Activated naive CD8-positive, alpha-beta T cell treated with anti-CD3 and anti-CD28 coated beads, Interleukin-2, amount 10 ng/mL, durations not matched to agents 7 days and 5 days (primary cell): ENCODE measurements at regions of chr12 and their contacts with region 1.

Region 1: DNA sequence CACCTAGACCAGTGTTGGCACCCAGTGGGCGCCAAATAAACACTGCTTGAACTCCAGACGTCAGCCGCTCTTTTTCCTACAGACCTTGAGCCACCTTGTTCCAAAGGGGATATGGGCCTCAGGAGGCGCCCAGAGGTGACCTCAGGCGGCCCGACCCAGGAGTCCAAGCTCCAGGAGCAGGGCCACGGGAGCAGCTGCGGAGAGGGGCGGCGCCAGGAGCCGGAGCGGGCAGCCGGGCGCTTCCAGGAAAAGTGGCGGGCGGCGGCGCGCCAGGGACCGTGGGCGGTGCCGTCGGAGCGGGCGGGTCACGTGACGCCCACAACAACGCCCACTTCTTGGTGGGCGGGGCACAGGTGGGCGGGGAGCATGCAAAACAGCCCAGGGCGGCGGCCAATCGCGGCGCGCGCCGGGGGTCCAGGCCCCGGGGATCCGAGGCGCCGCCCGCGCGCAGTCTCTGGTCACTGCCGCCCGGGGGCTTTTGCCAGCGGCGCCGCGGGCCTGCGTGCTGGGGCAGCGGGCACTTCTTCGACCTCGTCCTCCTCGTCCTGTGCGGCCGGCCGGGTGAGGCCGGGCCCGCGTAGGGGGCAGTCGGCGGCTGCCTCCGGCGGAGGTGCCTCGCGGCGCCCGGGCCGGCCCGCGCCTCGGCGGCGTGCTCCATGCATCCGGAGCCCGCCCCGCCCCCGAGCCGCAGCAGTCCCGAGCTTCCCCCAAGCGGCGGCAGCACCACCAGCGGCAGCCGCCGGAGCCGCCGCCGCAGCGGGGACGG is at the start of gene ORAI1:
- DNase-seq: peak; percentile 99
- ATAC-seq: peak; percentile 72
- H3K4me3 Mint-ChIP-seq: peak within 1 kb of the TSS; percentile 96
- H3K27ac Mint-ChIP-seq: peak within 1 kb of the TSS; percentile 96
- H3K4me1 Mint-ChIP-seq: peaks cover 42% of the 10 kb centered on the region
- H3K27me3 Mint-ChIP-seq: no peaks in the 10 kb centered on the region
- total RNA-seq, gene ORAI1: 54.2 to 60.1 TPM

Region 2: DNA sequence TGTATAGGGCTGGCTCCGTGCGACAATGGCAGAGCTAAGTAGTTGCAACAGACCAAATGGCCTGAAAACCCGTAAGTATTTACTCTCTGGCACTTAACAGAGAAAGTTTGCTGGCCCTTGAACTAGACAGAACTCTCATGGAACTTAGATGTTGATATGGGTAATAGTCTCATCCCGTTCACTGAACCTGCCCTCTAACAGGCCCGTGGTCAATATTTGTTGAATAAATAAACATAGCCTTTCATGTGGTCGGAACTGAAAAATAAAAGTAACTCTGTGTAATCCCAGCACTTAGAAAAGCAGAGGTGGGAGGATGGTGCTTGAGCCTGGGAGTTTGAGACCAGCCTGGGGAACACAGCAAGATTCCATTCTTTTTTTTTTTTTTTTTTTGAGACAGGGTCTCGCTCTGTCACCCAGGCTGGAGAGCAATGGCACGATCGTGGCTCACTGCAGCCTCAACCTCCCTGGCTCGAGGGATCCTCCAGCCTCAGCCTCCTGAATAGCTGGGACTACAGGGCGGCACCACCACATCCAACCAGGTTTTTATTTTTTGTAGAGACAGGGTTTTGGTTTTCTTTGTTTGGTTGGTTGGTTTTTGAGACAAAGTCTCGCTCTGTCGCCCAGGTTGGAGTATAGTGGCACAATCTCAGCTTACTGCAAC is 75.2 kb before region 1 on chr12:
- POLR2A ChIA-PET with region 1: interaction called, 14 read pairs
- DNase-seq: no peak
- ATAC-seq: no peak
- H3K4me3 Mint-ChIP-seq: no peak overlapping the region
- H3K27ac Mint-ChIP-seq: no peak overlapping the region
- H3K4me1 Mint-ChIP-seq: peaks cover 12% of the 10 kb centered on the region
- H3K27me3 Mint-ChIP-seq: no peaks in the 10 kb centered on the region

Region 3: GRCh38 chr12:121590476-121591143 is 35.7 kb before region 1 on chr12:
- POLR2A ChIA-PET with region 1: interaction called, 24 read pairs
- DNase-seq: peak; percentile 60
- ATAC-seq: peak; percentile 81
- H3K4me3 Mint-ChIP-seq: peak overlapping the region; percentile 83
- H3K27ac Mint-ChIP-seq: peak overlapping the region; percentile 97
- H3K4me1 Mint-ChIP-seq: peaks cover 29% of the 10 kb centered on the region
- H3K27me3 Mint-ChIP-seq: no peaks in the 10 kb centered on the region

Region 4: DNA sequence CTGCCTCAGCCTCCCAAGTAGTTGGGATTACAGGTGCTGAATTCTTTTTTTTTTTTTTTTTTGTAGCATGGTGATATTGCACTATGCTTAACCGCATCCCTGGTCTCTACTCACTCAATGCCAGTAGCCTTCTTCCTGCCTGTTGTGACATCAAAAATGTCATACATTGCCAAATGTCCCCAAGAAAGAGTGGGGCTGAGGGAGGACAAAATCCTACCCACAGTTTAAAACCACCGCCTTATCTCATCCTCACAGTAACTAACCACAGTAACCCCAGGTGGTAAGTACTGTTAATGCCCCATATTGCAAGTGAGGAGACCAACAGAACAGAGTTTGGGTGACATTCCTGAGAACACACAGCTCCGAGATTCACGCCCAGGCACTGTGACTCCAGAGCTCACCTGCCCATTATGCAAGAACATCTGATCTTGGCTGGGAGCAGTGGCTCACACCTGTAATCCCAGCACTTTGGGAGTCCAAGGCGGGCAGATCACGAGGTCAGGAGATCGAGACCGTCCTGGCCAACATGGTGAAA is 23.6 kb after region 1 on chr12:
- POLR2A ChIA-PET with region 1: interaction called, 29 read pairs
- DNase-seq: no peak
- ATAC-seq: peak; percentile 73
- H3K4me3 Mint-ChIP-seq: peak overlapping the region; percentile 39
- H3K27ac Mint-ChIP-seq: peak overlapping the region; percentile 87
- H3K4me1 Mint-ChIP-seq: peaks cover 27% of the 10 kb centered on the region
- H3K27me3 Mint-ChIP-seq: no peaks in the 10 kb centered on the region

Region 5: DNA sequence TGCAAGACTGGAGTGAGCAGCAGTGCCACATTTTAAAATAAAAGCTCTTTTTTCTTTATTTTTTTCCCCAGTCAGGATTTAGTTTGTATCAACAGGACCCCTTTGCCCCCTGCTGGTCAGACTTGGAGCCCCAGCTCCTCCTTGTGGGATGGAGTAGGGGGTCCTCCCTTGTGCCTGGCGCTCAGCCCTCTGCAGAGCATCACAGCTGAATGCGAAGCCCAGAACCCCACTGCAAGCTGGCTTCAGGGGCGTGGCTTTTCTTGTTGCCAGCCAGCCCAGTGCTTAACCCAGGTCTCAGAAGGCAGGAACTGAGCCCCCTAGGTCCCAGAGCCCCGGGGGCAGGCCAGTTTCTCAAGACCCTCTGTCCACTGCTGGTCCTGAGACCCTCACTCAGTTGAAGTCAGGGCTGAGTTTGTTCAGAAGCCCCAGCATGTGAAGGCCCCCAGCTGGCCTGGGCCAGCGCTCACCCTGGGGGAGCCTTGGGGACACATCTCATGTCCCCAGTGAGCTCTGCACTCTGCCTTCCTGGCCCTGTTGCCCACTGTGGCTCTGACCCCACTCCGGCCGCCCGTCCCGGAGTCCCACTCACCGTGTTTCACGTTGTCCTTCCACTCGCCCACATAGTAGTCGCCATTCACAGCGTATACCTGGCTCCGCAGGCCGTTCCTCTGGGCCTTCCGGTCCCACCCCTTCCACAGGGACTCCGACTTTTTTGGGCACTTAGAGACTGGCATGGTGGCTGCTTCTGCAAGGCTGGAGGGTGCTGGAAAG is 42.7 kb after region 1 on chr12:
- POLR2A ChIA-PET with region 1: interaction called, 166 read pairs
- DNase-seq: peak; percentile 63
- ATAC-seq: no peak
- H3K4me3 Mint-ChIP-seq: no peak overlapping the region
- H3K27ac Mint-ChIP-seq: peak overlapping the region; percentile 9
- H3K4me1 Mint-ChIP-seq: peaks cover 49% of the 10 kb centered on the region
- H3K27me3 Mint-ChIP-seq: no peaks in the 10 kb centered on the region